ENCODE measurements at regions of chrX and their contacts with region 1.

Region 1: GRCh38 chrX:110002300-110003166 is at the start of gene TMEM164:
- DNase-seq: peak; percentile 87
- H3K4me3 Mint-ChIP-seq: peak within 1 kb of the TSS; percentile 81
- H3K27ac Mint-ChIP-seq: peak within 1 kb of the TSS; percentile 76
- H3K4me1 Mint-ChIP-seq: peaks cover 34% of the 10 kb centered on the region
- H3K27me3 Mint-ChIP-seq: no peaks in the 10 kb centered on the region
- total RNA-seq, gene TMEM164: 10.1 to 13.2 TPM

Region 2: DNA sequence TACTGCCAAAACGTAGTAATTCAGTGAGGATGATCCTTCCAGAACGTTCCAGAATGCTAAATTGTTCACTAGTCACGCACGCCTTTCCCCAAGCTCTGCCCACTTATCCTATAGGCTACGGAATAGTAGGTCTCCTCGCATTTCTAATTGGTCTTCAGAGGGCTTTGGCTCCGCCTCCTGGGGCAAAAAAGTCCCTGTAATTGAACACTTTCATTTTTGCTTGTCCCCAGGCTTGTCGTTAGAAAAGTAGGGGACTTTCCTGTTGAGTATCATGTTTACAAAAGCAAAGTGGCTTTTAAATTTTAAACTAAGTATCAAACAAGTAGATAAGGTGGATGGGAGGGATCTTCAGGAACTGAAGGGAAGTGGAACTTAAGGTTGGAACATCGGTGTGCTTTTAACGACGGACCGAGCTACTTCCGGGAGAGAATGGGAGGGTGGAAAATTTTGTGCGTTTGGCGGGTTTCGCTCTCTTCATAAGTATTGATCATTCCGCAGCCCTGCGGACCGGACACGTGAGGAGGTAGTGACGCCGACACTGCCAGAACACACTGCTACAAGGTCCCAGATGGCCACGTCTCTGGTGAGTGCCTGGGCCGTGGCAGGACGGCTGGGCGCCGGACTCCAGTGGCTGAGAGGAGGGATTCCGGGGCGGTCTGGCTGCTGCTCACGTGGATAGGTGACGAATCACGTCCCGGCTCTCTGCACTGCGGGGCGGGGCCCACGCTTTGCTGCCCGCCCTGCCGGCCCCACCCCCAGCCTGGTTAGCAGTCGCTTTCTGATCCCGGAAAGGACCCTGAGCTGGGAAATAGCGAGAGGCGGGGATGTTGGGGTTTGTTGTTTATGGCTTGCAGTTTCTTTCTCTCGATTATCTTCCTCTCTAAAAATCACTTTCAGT is 465.8 kb before region 1 on chrX and contains the start of gene NXT2:
- CTCF ChIA-PET with region 1: no interaction called
- POLR2A ChIA-PET with region 1: no interaction called
- intact Hi-C with region 1: loop called (anchors 5 kb)
- DNase-seq: peak; percentile 90
- H3K4me3 Mint-ChIP-seq: peak within 1 kb of the TSS; percentile 90
- H3K27ac Mint-ChIP-seq: peak within 1 kb of the TSS; percentile 97
- H3K4me1 Mint-ChIP-seq: peaks cover 12% of the 10 kb centered on the region
- H3K27me3 Mint-ChIP-seq: peaks cover 6% of the 10 kb centered on the region
- total RNA-seq, gene NXT2: 12.6 to 13.9 TPM

Region 3: GRCh38 chrX:109818976-109819375 is 183.6 kb before region 1 on chrX:
- CTCF ChIA-PET with region 1: no interaction called
- POLR2A ChIA-PET with region 1: no interaction called
- intact Hi-C with region 1: no loop called
- DNase-seq: no peak
- H3K4me3 Mint-ChIP-seq: no peak overlapping the region
- H3K27ac Mint-ChIP-seq: no peak overlapping the region
- H3K4me1 Mint-ChIP-seq: no peaks in the 10 kb centered on the region
- H3K27me3 Mint-ChIP-seq: no peaks in the 10 kb centered on the region

Region 4: GRCh38 chrX:110133735-110134370 is 131.3 kb after region 1 on chrX:
- CTCF ChIA-PET with region 1: no interaction called
- POLR2A ChIA-PET with region 1: no interaction called
- intact Hi-C with region 1: loop called (anchors 5 kb)
- DNase-seq: no peak
- H3K4me3 Mint-ChIP-seq: no peak overlapping the region
- H3K27ac Mint-ChIP-seq: peak overlapping the region; percentile 8
- H3K4me1 Mint-ChIP-seq: peaks cover 18% of the 10 kb centered on the region
- H3K27me3 Mint-ChIP-seq: no peaks in the 10 kb centered on the region

Region 5: DNA sequence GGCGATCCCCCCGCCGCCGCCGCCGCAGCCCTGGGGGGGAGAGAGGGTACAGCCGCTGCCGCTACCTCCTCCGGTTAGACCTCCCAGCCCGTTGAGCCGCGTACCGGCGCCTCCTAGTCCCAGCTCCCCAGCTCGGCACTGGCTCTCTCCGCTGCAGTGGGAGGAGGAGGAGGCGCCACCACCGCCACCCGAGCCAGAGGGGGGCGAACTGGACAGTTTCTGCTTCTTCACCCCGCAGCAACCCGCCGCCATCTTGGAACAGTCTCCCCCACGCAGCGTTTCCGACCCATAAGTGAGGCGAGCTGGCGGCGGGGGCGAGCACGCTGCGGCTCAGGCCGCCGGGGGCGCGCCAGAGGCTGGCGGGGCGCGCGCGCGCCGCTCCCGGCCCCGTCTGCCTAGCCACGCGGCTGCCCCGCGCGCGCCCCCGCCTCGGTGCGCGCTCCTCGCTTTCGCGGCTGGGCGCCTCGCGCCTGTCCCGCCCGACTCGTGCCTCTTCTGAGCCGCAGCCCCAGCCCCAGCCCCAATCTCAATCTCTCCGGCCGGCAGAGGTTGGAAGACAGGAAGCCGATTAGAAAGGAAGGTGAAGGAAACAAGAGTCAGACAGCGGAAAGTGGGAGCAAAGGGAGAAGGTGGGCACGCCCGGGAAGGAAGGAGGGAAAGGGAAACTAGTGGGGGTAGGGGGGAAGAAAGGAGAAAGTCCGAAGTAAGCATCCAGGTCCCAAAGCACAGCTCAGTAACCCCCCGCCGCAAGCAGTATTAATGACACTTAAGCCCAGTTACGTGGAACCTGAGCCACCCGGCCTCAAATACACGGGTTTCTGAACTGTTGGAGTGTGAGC is 315.5 kb after region 1 on chrX and contains the start of gene AMMECR1:
- CTCF ChIA-PET with region 1: no interaction called
- POLR2A ChIA-PET with region 1: no interaction called
- intact Hi-C with region 1: loop called (anchors 5 kb)
- DNase-seq: peak; percentile 84
- H3K4me3 Mint-ChIP-seq: peak within 1 kb of the TSS; percentile 93
- H3K27ac Mint-ChIP-seq: peak within 1 kb of the TSS; percentile 95
- H3K4me1 Mint-ChIP-seq: peaks cover 27% of the 10 kb centered on the region
- H3K27me3 Mint-ChIP-seq: no peaks in the 10 kb centered on the region
- total RNA-seq, gene AMMECR1: 8.0 to 8.9 TPM

Measured in activated CD4-positive, alpha-beta memory T cell treated with anti-CD3 and anti-CD28 coated beads for 36 hours (primary cell).